ENCODE measurements at regions of chr16 and their contacts with region 1.

Region 1: GRCh38 chr16:67872786-67873537 is at the start of gene EDC4:
- DNase-seq: peak; percentile 94
- H3K4me3 Mint-ChIP-seq: peak within 1 kb of the TSS; percentile 87
- H3K27ac Mint-ChIP-seq: peak within 1 kb of the TSS; percentile 84
- H3K4me1 Mint-ChIP-seq: peaks cover 31% of the 10 kb centered on the region
- H3K27me3 Mint-ChIP-seq: no peaks in the 10 kb centered on the region
- CTCF ChIP-seq: no peak
- total RNA-seq, gene EDC4: 85.8 and 88.1 TPM in 2 replicates

Region 2: GRCh38 chr16:67883872-67884261 is 10.9 kb after region 1 on chr16:
- CTCF ChIA-PET with region 1: interaction called, 10 read pairs
- intact Hi-C with region 1: no loop called
- DNase-seq: peak; percentile 86
- H3K4me3 Mint-ChIP-seq: no peak overlapping the region
- H3K27ac Mint-ChIP-seq: no peak overlapping the region
- H3K4me1 Mint-ChIP-seq: peaks cover 10% of the 10 kb centered on the region
- H3K27me3 Mint-ChIP-seq: no peaks in the 10 kb centered on the region
- CTCF ChIP-seq: peak; percentile 89

Measured in Calu3 (cell line).